ENCODE measurements at regions of chr20 and their contacts with region 1.

Region 1: GRCh38 chr20:51594236-51595057 is 51.9 kb upstream of the NFATC2 start:
- DNase-seq: no peak
- H3K4me3 ChIP-seq: no peak overlapping the region
- H3K27ac ChIP-seq: peak overlapping the region; percentile 66
- H3K4me1 ChIP-seq: peaks cover 15% of the 10 kb centered on the region
- H3K27me3 ChIP-seq: no peaks in the 10 kb centered on the region
- CTCF ChIP-seq: no peak
- POLR2A ChIP-seq: no peak

Region 2: GRCh38 chr20:50224531-50225255 is 1369.8 kb before region 1 on chr20:
- intact Hi-C with region 1: no loop called
- DNase-seq: peak in 1 of 2 donors; percentile 98
- H3K4me3 ChIP-seq: no peak overlapping the region
- H3K27ac ChIP-seq: peak overlapping the region; percentile 94
- H3K4me1 ChIP-seq: peaks cover 31% of the 10 kb centered on the region
- H3K27me3 ChIP-seq: no peaks in the 10 kb centered on the region
- CTCF ChIP-seq: no peak
- POLR2A ChIP-seq: peak in 1 of 2 donors; percentile 20

Region 3: GRCh38 chr20:51366155-51366886 is 228.1 kb before region 1 on chr20:
- intact Hi-C with region 1: loop called (anchors 5 kb)
- DNase-seq: no peak
- H3K4me3 ChIP-seq: no peak overlapping the region
- H3K27ac ChIP-seq: peak overlapping the region; percentile 83
- H3K4me1 ChIP-seq: peaks cover 13% of the 10 kb centered on the region
- H3K27me3 ChIP-seq: no peaks in the 10 kb centered on the region
- CTCF ChIP-seq: no peak
- POLR2A ChIP-seq: no peak

Region 4: DNA sequence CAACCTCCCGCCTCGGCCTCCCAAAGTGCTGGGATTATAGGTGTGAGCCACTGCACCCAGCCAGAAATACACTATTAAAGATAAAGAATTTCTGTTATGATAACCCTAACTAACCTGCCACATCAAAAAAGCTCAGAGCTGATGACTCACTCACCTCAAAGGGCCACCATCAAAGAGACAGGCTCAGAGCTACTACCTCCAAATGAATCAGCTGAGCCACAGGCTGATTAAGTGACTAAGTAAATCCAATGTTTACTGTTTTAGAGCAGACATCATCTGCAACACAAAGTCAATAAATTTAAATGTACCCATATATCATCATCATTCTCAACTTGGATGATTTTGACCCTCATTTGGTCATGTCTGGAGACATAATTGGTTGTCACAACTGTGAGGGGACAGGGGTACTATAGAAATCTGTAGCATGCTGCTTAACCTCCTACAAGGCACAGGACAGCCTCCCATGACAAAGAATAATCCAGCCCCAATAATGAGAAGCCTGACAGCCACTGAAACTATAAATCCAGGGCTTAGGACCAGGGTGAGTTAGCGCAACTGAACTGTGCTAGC is 67.2 kb after region 1 on chr20:
- intact Hi-C with region 1: no loop called
- DNase-seq: no peak
- H3K4me3 ChIP-seq: no peak overlapping the region
- H3K27ac ChIP-seq: no peak overlapping the region
- H3K4me1 ChIP-seq: no peaks in the 10 kb centered on the region
- H3K27me3 ChIP-seq: no peaks in the 10 kb centered on the region
- CTCF ChIP-seq: no peak
- POLR2A ChIP-seq: no peak

Region 5: DNA sequence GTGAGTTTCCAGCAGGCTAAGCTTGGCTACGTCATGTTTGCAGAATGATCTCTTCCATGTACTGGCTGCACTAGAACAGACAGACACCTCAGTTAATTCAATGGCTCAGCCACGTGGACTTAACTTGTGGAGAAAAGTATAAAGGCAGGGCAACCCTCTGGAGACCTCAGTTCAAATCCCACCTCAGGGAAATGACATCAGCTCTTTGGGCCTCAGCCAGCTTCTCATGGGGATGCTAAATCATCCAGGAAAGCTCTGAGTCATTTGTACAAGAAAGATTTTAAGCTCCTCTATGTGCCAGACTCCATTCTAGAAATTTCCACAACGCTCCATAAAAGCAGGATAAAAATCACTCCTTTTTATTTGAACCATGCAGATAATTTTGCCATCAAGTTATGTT is 336.3 kb after region 1 on chr20:
- intact Hi-C with region 1: no loop called
- DNase-seq: no peak
- H3K4me3 ChIP-seq: no peak overlapping the region
- H3K27ac ChIP-seq: no peak overlapping the region
- H3K4me1 ChIP-seq: no peaks in the 10 kb centered on the region
- H3K27me3 ChIP-seq: no peaks in the 10 kb centered on the region
- CTCF ChIP-seq: no peak
- POLR2A ChIP-seq: no peak